ENCODE measurements at regions of chr1 and their contacts with region 1.

Region 1: GRCh38 chr1:68173911-68174737 is 58.2 kb downstream of the WLS start:
- DNase-seq: peak; percentile 93
- H3K4me3 ChIP-seq: peak overlapping the region in 1 of 3 experiments; percentile 31
- H3K27ac ChIP-seq: peak overlapping the region; percentile 34
- H3K4me1 ChIP-seq: peaks cover 49% of the 10 kb centered on the region
- H3K27me3 ChIP-seq: no peaks in the 10 kb centered on the region
- CTCF ChIP-seq: no peak

Region 2: DNA sequence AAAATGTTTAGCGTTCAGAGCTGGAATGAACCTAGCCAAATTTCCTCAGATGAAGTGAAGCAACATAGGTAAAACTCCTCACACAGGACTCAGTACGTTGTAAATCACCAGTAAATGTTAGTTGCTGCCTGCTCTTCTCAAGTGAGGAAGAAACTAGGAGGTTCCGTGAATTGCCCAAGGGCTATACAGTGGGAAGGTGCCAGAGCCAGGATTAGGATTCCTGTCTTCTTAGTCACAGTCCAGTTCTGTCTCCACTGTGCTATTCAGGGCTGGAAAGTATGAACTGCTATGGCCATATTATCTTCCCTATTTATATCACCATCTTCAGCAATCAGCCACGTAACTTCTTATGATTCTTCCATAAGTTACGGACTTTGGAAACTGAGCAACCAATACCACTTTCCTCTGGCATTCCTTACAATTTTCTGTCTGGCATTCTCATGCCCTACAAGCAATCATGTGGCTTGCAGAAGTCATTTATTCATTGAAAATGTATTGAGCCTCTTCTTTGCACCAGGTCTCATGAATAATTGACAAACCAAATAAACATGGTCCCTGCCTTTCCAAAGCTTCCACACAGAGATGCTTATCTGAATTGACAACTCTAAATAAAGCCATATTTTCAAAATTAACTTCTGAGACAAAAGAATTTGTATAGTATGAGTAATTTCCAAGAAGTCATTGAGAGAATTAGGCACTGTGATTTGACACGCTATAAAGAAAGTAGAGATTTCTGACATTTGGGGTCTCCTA is 1911.7 kb before region 1 on chr1:
- CTCF ChIA-PET with region 1: no interaction called
- dilution Hi-C with region 1: no loop called
- in situ Hi-C with region 1: no loop called
- intact Hi-C with region 1: loop called (anchors 10 kb)
- DNase-seq: peak; percentile 94
- H3K4me3 ChIP-seq: no peak overlapping the region
- H3K27ac ChIP-seq: no peak overlapping the region
- H3K4me1 ChIP-seq: peaks cover 33% of the 10 kb centered on the region
- H3K27me3 ChIP-seq: peaks cover 2% of the 10 kb centered on the region
- CTCF ChIP-seq: no peak

Region 3: GRCh38 chr1:66788231-66788939 is 1385.7 kb before region 1 on chr1:
- CTCF ChIA-PET with region 1: no interaction called
- dilution Hi-C with region 1: no loop called
- in situ Hi-C with region 1: no loop called
- intact Hi-C with region 1: no loop called
- DNase-seq: peak; percentile 79
- H3K4me3 ChIP-seq: no peak overlapping the region
- H3K27ac ChIP-seq: no peak overlapping the region
- H3K4me1 ChIP-seq: no peaks in the 10 kb centered on the region
- H3K27me3 ChIP-seq: no peaks in the 10 kb centered on the region
- CTCF ChIP-seq: no peak

Region 4: DNA sequence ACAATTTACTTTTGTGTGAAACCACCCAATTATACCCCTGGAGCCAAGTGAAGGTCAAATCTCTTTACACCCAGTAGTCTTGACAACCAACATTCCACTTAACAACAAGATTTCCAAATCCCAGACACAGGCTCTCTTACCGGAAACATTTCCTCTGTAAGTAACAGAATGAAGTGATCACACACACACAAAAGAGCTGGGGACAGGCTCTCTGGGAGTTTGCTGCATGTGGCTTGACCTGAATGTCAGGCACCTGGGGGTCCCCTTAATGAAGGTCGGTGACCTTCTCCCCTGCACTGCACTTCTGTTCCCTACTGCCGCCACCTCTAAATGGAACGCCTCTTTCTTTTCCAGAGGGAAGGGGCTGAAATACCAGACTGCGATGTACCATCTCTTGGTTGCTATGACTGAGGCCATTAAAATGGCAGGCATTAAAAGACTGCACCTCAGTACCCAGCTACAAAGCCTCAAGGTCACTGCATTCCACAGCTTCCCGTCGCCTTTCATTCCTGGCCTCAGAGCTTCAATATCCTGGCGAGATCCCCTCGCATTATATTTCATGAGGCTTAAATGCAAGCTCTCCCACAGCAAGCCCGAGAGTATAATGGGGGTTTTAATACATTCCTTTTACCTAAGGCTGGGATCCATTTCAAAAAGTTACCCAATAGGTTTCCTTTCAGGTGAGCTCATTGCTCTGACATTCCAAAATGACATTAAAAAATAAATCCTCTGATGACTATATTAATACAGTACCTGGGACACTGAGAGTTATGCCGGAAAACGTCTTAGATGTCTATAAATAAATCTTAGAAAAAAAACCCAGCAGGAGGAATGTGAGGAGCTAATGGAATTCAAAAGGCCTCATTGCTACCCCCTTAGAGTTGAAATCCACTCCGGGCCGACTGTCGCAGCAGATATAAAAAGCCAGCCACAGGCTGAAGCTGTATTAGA is 32.8 kb before region 1 on chr1:
- CTCF ChIA-PET with region 1: no interaction called
- dilution Hi-C with region 1: no loop called
- in situ Hi-C with region 1: no loop called
- intact Hi-C with region 1: no loop called
- DNase-seq: peak; percentile 26
- H3K4me3 ChIP-seq: no peak overlapping the region
- H3K27ac ChIP-seq: peak overlapping the region; percentile 15
- H3K4me1 ChIP-seq: peaks cover 40% of the 10 kb centered on the region
- H3K27me3 ChIP-seq: no peaks in the 10 kb centered on the region
- CTCF ChIP-seq: no peak

Region 5: GRCh38 chr1:68162761-68163160 is 11.4 kb before region 1 on chr1:
- CTCF ChIA-PET with region 1: no interaction called
- dilution Hi-C with region 1: no loop called
- in situ Hi-C with region 1: no loop called
- intact Hi-C with region 1: no loop called
- DNase-seq: no peak
- H3K4me3 ChIP-seq: no peak overlapping the region
- H3K27ac ChIP-seq: no peak overlapping the region
- H3K4me1 ChIP-seq: no peaks in the 10 kb centered on the region
- H3K27me3 ChIP-seq: no peaks in the 10 kb centered on the region
- CTCF ChIP-seq: peak in 1 of 2 donors; percentile 16

Region 6: GRCh38 chr1:68197891-68198290 is 23.8 kb after region 1 on chr1:
- CTCF ChIA-PET with region 1: no interaction called
- dilution Hi-C with region 1: no loop called
- in situ Hi-C with region 1: no loop called
- intact Hi-C with region 1: loop called (anchors 2 kb)
- DNase-seq: peak; percentile 87
- H3K4me3 ChIP-seq: no peak overlapping the region
- H3K27ac ChIP-seq: no peak overlapping the region
- H3K4me1 ChIP-seq: peaks cover 17% of the 10 kb centered on the region
- H3K27me3 ChIP-seq: no peaks in the 10 kb centered on the region
- CTCF ChIP-seq: no peak

Measured in mammary epithelial cell (primary cell).